Cardiac septum (tissue), 1 donor: ENCODE measurements at regions of chr5 and their contacts with region 1.

Region 1: DNA sequence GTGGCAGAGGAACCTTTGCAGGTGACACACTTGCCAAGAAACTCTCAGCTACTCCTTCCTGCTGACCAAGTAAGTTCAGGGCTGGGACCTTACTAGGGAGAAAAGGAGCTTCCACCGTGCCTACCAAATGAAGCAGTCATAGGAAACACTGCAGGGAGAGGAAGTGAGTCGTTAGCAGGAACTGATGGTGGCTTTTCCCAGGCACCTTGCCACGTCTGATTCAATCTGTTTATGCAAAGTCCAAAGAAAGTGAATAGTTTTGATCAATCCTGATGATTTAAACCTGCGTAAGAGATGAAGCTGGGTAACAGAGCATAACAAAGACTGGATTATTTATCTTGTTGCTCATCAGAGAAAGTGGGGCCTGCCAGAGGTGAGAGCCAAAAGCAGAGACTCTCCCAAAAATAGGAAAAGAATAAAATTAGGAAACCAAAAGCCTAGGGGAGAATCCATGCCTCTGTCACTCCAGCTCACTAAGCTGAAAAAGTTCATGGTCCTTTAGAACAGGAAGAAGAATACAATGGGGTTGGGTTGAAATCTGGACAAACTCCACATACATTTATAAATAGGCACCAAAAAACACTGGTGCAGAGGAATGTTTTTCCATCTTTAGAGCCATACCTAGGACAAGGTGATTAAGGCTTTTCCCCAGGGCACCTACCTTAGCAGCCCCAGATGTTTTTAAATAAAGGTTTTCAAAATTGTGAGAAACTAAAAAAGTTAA is 9.3 kb upstream of the PFDN1 start:
- DNase-seq: no peak

Region 2: DNA sequence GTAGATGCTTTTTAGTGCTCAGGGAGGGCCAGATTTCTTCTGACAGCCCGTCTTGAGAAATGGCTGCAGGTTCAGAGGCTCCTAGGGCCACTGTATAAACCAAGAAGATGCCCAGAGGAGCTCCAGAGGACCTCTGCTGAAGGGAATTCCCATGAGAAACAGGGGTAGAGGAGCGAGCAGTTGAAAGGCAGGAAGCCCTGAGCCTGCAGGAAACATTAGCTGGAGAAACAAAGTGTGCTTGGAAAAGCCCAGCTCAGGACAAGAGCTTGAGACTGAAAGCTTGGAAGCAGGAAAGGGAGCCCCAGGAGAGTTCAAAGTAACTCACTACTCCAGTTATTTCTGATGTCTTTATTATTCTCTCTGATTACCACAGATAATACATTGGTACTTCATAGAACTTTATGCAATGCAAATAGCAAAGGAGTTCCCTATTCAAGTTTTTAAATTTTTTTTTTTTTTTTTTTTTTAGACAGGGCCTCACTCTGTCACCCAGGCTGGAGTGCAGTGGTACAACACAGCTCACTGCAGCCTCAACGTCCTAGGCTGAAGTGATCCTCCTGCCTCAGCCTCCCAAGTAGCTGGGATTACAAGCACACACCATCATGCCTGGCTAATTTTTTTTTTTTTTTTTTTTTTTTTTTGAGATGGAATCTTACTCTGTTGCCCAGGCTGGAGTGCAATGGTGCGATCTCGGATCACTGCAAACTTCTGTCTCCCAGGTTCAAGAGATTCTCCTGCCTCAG is 17.7 kb after region 1 on chr5:
- intact Hi-C with region 1: loop called (anchors 1 kb)
- DNase-seq: no peak